KBM-7 (cell line): ENCODE measurements at regions of chr21 and their contacts with region 1.

Region 1: DNA sequence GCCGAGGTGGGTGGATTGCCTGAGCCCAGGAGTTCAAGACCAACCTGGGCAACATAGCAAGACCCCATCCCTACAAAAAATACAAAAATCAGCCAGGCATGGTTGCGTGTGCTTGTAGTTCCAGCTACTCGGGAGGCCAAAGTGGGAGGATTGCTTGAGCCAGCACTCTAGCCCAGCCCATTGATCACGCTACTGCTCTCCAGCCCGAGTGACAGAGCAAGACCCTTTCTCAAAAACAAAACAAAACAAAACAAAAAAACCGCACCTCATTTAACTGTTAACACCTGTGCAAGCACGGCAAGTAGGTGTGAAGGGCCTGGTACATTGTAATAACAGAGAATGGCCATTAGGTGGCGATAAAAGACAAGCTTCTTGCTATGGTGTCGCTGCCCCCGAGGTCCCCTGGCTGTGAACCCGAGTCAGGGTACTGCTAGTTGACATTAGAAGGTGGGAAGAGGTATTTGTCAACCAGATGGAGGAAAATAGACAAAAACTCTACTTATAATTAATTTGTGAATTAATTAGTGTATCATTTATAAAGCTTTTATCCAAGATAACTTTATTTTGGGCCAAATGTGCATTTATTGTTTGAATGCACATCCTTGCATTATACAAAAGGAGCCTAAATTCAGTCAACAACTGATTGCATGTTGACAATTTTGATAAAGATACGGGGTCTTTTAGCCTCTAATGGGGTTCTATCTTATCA is 66.5 kb downstream of the SH3BGR start:
- DNase-seq: peak; percentile 65

Region 2: GRCh38 chr21:39281207-39281606 is 237.1 kb before region 1 on chr21:
- in situ Hi-C with region 1: no loop called
- DNase-seq: no peak

Region 3: GRCh38 chr21:39612233-39613040 is 94.1 kb after region 1 on chr21 and contains the start of gene B3GALT5:
- in situ Hi-C with region 1: no loop called
- DNase-seq: no peak

Region 4: DNA sequence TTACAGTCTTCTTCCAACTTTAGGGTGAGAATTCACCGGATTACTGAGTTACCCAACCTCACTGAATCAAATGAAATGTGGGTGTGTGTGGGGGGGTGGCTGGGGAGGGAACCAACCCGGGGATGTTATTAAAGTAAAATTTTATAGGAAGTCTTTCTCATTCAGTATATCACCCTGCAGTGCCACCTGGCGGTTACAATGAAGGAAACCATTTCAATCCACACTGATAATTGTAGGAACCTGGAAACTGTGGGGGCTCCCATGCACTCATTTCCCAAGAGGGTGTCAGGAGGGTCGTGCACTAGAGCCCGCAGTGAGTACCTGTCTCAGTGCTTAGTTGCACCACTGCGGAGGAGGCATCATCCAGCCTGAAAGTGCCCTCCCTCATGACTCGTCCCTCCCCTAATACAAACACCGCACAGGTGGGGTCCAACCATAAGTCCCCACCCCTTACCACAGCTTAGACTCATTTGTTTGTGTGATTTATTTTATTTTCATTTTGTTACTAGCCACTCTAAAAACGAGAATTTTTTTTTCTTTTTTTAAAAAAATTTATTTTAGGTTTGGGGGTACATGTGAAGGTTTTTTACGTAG is 197.6 kb after region 1 on chr21:
- in situ Hi-C with region 1: loop called (anchors 25 kb)
- DNase-seq: peak; percentile 35

Region 5: DNA sequence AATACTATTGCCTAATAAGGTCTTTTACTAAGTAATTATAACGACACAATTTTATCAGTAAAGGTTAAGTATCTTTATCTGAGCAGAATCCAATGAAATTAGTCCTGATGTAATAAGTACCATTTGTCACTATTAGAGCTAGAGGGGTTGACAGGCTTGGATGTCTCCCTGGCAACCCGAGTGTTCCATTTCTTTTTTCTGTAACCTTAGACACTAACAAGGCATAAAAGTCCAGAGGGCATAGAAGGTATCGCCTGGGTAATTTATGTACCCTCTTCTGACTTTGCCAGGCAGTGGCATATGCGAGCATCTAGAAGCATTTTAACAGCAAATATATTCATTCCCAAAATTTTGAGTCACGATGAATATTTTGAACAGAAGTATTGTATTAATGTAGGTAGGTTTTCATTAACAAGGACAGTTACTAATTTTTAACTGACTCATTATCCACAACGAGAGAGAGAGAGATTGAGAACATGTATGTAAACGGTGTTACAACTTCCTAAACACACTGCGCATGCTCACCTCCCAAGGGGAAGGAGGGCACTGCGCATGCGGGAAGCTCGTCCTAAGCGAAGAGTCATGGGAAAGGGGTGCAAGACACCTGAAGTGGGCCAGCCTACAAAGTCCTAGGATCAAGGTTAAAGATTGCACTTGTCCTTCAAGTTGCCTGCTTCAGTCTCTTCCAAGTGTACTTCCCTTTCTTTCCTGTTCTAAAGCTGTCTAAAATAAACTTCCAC is 904.8 kb after region 1 on chr21:
- in situ Hi-C with region 1: no loop called
- DNase-seq: no peak